ENCODE measurements at regions of chr11 and their contacts with region 1.

Region 1: DNA sequence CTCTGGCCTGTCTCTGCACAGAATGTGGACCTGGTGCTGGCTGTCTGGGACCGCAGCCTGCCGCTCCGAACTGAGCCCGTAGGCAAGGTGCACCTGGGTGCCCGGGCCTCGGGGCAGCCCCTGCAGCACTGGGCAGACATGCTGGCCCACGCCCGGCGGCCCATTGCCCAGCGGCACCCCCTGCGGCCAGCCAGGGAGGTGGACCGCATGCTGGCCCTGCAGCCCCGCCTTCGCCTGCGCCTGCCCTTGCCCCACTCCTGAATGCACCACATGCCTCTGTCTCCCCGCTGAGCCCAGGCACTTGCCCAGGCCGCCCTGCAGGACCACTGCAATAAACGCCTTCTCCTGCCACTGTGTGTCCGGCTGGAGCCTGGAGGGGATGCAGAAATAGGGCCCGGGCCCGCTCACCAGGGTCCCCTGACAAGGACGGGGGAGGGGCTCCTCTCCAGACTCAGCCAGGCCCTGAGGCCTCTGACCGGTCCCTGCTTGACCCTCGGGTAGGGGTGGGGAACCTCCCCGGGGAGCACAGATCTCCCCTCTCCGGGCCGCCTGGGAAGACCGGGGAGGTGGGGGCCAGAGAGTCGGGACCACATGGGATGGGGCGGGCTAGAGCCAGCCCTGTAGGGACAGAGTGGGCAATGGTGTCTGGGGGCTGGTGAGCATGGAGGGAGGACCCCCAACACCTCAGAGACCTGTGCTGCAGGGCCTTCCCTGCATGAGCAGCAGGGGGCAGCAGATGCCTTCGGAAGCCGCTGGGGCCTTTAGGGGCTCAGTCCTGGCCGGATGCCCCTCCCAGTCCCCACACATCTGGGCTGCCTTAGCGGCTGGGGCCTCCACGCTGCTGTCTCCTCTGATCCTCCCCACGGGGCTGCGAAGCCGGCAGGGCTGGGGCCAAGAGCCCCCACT is 1.4 kb upstream of the TNNI2 start:
- DNase-seq: peak in 1 of 2 donors; percentile 65
- ATAC-seq: peak in 1 of 2 donors; percentile 13
- H3K4me3 ChIP-seq: no peak overlapping the region
- H3K27ac ChIP-seq: peak overlapping the region; percentile 88 to 95 (median 92)
- H3K4me1 ChIP-seq: peaks cover 0 to 28% of the 10 kb centered on the region in 2 donors
- H3K27me3 ChIP-seq: no peaks in the 10 kb centered on the region
- CTCF ChIP-seq: peak; percentile 84 to 92 (median 88)
- POLR2A ChIP-seq: no peak

Region 2: GRCh38 chr11:1632053-1632714 is 205.2 kb before region 1 on chr11:
- in situ Hi-C with region 1: no loop called
- intact Hi-C with region 1: no loop called
- DNase-seq: no peak
- ATAC-seq: no peak
- H3K4me3 ChIP-seq: no peak overlapping the region
- H3K27ac ChIP-seq: no peak overlapping the region
- H3K4me1 ChIP-seq: no peaks in the 10 kb centered on the region
- H3K27me3 ChIP-seq: peaks cover 0 to 11% (median 4%) of the 10 kb centered on the region in 3 donors
- CTCF ChIP-seq: no peak
- POLR2A ChIP-seq: no peak

Region 3: GRCh38 chr11:1782831-1783724 is 54.3 kb before region 1 on chr11:
- in situ Hi-C with region 1: no loop called
- intact Hi-C with region 1: no loop called
- DNase-seq: no peak
- ATAC-seq: no peak
- H3K4me3 ChIP-seq: no peak overlapping the region
- H3K27ac ChIP-seq: no peak overlapping the region
- H3K4me1 ChIP-seq: no peaks in the 10 kb centered on the region
- H3K27me3 ChIP-seq: no peaks in the 10 kb centered on the region
- CTCF ChIP-seq: no peak
- POLR2A ChIP-seq: no peak

Region 4: GRCh38 chr11:1882519-1883238 is 45.3 kb after region 1 on chr11:
- in situ Hi-C with region 1: no loop called
- intact Hi-C with region 1: loop called (anchors 5 kb)
- DNase-seq: peak; percentile 59 to 81
- ATAC-seq: peak; percentile 85 to 91
- H3K4me3 ChIP-seq: no peak overlapping the region
- H3K27ac ChIP-seq: peak overlapping the region; percentile 84 to 89 (median 88)
- H3K4me1 ChIP-seq: peaks cover 31% of the 10 kb centered on the region in 2 donors
- H3K27me3 ChIP-seq: no peaks in the 10 kb centered on the region
- CTCF ChIP-seq: peak; percentile 86 to 98 (median 97)
- POLR2A ChIP-seq: no peak

Region 5: GRCh38 chr11:1959786-1960185 is 122.4 kb after region 1 on chr11:
- in situ Hi-C with region 1: no loop called
- intact Hi-C with region 1: no loop called
- DNase-seq: peak in 1 of 2 donors; percentile 8
- ATAC-seq: no peak
- H3K4me3 ChIP-seq: no peak overlapping the region
- H3K27ac ChIP-seq: no peak overlapping the region
- H3K4me1 ChIP-seq: no peaks in the 10 kb centered on the region
- H3K27me3 ChIP-seq: no peaks in the 10 kb centered on the region
- CTCF ChIP-seq: no peak
- POLR2A ChIP-seq: no peak

Measured in gastrocnemius medialis (tissue), 4 donors.